ENCODE measurements at regions of chr11 and their contacts with region 1.

Region 1: GRCh38 chr11:75532200-75533048 is 6.7 kb upstream of the GDPD5 start:
- DNase-seq: peak; percentile 77 to 90
- ATAC-seq: peak; percentile 43 to 67 (median 52)
- H3K4me3 ChIP-seq: no peak overlapping the region
- H3K4me3 Mint-ChIP-seq: no peak overlapping the region
- H3K27ac ChIP-seq: no peak overlapping the region
- H3K27ac Mint-ChIP-seq: no peak overlapping the region
- H3K4me1 ChIP-seq: peaks cover 39% of the 10 kb centered on the region
- H3K4me1 Mint-ChIP-seq: peaks cover 37 to 66% of the 10 kb centered on the region in 2 donors
- H3K27me3 ChIP-seq: no peaks in the 10 kb centered on the region
- H3K27me3 Mint-ChIP-seq: peaks cover 13 to 18% of the 10 kb centered on the region in 2 donors
- CTCF ChIP-seq: peak; percentile 97

Region 2: GRCh38 chr11:75280227-75280701 is 252.2 kb before region 1 on chr11:
- intact Hi-C with region 1: loop called (anchors 2 kb)
- DNase-seq: peak; percentile 73 to 89
- ATAC-seq: peak; percentile 62 to 74 (median 74)
- H3K4me3 ChIP-seq: no peak overlapping the region
- H3K4me3 Mint-ChIP-seq: no peak overlapping the region
- H3K27ac ChIP-seq: no peak overlapping the region
- H3K27ac Mint-ChIP-seq: peak overlapping the region; percentile 24 to 74
- H3K4me1 ChIP-seq: peaks cover 30% of the 10 kb centered on the region
- H3K4me1 Mint-ChIP-seq: peaks cover 38 to 39% of the 10 kb centered on the region in 2 donors
- H3K27me3 ChIP-seq: no peaks in the 10 kb centered on the region
- H3K27me3 Mint-ChIP-seq: no peaks in the 10 kb centered on the region
- CTCF ChIP-seq: peak; percentile 93

Region 3: GRCh38 chr11:75445315-75445953 is 87.0 kb before region 1 on chr11:
- intact Hi-C with region 1: loop called (anchors 1 kb)
- DNase-seq: peak; percentile 72 to 84
- ATAC-seq: peak; percentile 76 to 99 (median 95)
- H3K4me3 ChIP-seq: no peak overlapping the region
- H3K4me3 Mint-ChIP-seq: no peak overlapping the region
- H3K27ac ChIP-seq: no peak overlapping the region
- H3K27ac Mint-ChIP-seq: no peak overlapping the region
- H3K4me1 ChIP-seq: no peaks in the 10 kb centered on the region
- H3K4me1 Mint-ChIP-seq: peaks cover 4% of the 10 kb centered on the region in 2 donors
- H3K27me3 ChIP-seq: no peaks in the 10 kb centered on the region
- H3K27me3 Mint-ChIP-seq: peaks cover 2 to 14% of the 10 kb centered on the region in 2 donors
- CTCF ChIP-seq: peak; percentile 91

Region 4: GRCh38 chr11:75554258-75555022 is 22.0 kb after region 1 on chr11:
- intact Hi-C with region 1: no loop called
- DNase-seq: no peak
- ATAC-seq: no peak
- H3K4me3 ChIP-seq: no peak overlapping the region
- H3K4me3 Mint-ChIP-seq: no peak overlapping the region
- H3K27ac ChIP-seq: no peak overlapping the region
- H3K27ac Mint-ChIP-seq: no peak overlapping the region
- H3K4me1 ChIP-seq: no peaks in the 10 kb centered on the region
- H3K4me1 Mint-ChIP-seq: no peaks in the 10 kb centered on the region
- H3K27me3 ChIP-seq: no peaks in the 10 kb centered on the region
- H3K27me3 Mint-ChIP-seq: peaks cover 0 to 4% of the 10 kb centered on the region in 2 donors
- CTCF ChIP-seq: no peak

Region 5: DNA sequence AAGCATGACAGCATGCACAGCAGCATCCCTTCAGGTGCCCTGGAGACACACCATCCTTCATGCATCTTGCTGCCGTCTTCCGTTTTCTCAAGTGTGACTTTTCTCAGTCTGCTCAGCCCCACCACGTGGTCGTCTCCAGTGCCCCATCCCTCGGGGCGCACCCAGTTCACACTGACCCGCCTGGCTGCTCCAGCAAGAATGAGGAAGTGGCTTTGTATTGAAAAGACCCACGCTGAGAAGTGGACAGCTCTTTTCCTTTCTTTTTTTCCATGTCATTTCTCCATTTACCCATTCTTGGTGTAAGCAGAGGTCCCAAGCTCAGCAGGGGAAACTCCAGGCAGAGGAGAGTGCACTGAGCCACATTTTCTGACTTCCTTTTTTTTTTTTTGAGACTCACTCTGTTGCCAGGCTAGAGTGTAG is 44.1 kb after region 1 on chr11:
- intact Hi-C with region 1: loop called (anchors 1 kb)
- DNase-seq: peak; percentile 33 to 47
- ATAC-seq: peak; percentile 83 to 94 (median 92)
- H3K4me3 ChIP-seq: no peak overlapping the region
- H3K4me3 Mint-ChIP-seq: peak overlapping the region; percentile 37
- H3K27ac ChIP-seq: no peak overlapping the region
- H3K27ac Mint-ChIP-seq: peak overlapping the region; percentile 34 to 82
- H3K4me1 ChIP-seq: peaks cover 13% of the 10 kb centered on the region
- H3K4me1 Mint-ChIP-seq: peaks cover 15 to 21% of the 10 kb centered on the region in 2 donors
- H3K27me3 ChIP-seq: no peaks in the 10 kb centered on the region
- H3K27me3 Mint-ChIP-seq: peaks cover 1 to 2% of the 10 kb centered on the region in 2 donors
- CTCF ChIP-seq: no peak

Region 6: GRCh38 chr11:75639762-75640181 is 107.3 kb after region 1 on chr11:
- intact Hi-C with region 1: no loop called
- DNase-seq: no peak
- ATAC-seq: no peak
- H3K4me3 ChIP-seq: no peak overlapping the region
- H3K4me3 Mint-ChIP-seq: no peak overlapping the region
- H3K27ac ChIP-seq: no peak overlapping the region
- H3K27ac Mint-ChIP-seq: no peak overlapping the region
- H3K4me1 ChIP-seq: no peaks in the 10 kb centered on the region
- H3K4me1 Mint-ChIP-seq: no peaks in the 10 kb centered on the region
- H3K27me3 ChIP-seq: peaks cover 4% of the 10 kb centered on the region
- H3K27me3 Mint-ChIP-seq: peaks cover 19 to 28% of the 10 kb centered on the region in 2 donors
- CTCF ChIP-seq: no peak